Activated T-helper 1 cell treated with anti-CD3 and anti-CD28 coated beads, Interleukin-12 subunit alpha, Interleukin-12 subunit beta, Interleukin-2, Interleukin-4 antibody, amounts not matched to agents 30 ng/mL and 10 ng/mL and 1 ng/mL, durations not matched to agents 14 hours and 24 hours and 36 hours (primary cell): ENCODE measurements at regions of chr2 and their contacts with region 1.

Region 1: GRCh38 chr2:145811276-145812164 is 1291.6 kb upstream of the ZEB2 start:
- DNase-seq: no peak
- H3K4me3 Mint-ChIP-seq: no peak overlapping the region
- H3K27ac Mint-ChIP-seq: no peak overlapping the region
- H3K4me1 Mint-ChIP-seq: no peaks in the 10 kb centered on the region
- H3K27me3 Mint-ChIP-seq: no peaks in the 10 kb centered on the region

Region 2: GRCh38 chr2:145841973-145842372 is 30.5 kb after region 1 on chr2:
- intact Hi-C with region 1: loop called (anchors 1 kb)
- DNase-seq: no peak
- H3K4me3 Mint-ChIP-seq: no peak overlapping the region
- H3K27ac Mint-ChIP-seq: no peak overlapping the region
- H3K4me1 Mint-ChIP-seq: no peaks in the 10 kb centered on the region
- H3K27me3 Mint-ChIP-seq: no peaks in the 10 kb centered on the region